Posterior cingulate gyrus (tissue), 11 donors: ENCODE measurements at regions of chrX and their contacts with region 1.

Region 1: DNA sequence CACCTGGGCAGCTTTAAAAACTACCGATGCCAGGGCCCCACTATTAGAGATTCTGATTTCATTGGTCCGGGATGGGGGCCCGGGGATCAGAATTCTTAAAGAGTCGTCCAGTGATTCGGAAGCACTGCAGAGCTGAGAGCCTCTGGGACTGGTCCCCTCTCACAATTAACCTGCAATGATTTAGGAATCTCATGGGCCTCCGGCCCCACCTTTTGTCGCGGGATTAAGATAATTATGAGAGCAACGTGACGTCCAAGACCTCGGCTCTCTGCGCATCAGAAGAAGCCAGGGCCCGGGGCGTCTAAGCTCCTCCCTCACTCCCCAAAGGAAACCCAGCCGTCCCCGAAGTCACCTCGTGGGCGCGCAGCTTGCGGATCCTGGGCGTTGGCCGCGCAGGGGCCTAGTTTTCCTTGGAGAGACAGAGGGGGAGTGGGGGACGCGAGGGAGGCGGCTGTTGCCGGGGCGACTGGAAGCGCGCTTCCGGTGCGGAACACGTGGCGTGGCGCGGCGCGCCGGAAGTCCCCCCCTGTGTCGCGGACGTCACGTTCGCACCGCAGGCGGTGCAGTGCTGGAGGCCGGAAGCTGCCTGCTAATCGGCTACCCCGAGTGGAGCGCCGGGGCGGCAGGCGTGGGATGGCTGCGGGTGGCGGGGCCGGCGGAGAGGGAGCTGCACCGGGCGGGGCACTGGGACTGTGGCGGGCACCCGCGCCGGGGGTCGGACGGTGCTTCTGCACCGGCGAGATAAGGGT is at the start of gene GEMIN8:
- DNase-seq: peak; percentile 74 to 98 (median 82)

Region 2: GRCh38 chrX:13653022-13653693 is 376.4 kb before region 1 on chrX and contains the start of gene TCEANC:
- intact Hi-C with region 1: loop called (anchors 1 kb)
- DNase-seq: peak; percentile 87 to 99 (median 92)

Region 3: DNA sequence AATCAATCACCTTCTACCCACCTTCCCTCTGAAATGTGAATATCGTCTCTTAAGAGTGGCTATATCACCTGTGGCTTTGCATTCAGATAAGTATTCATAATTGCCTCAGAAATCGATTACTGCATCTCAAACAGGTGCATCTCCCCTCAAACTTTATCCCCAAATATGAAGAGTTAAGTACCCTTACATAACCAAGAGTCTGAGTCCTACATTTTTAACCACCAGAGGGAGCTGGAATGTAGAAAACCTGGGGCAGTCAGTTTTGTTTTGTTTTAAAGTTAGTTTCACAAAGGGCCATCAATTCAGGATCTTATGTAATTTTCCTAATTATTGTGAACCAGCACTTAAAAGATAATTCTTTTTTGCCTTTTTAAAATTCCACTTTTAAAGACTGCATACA is 371.0 kb before region 1 on chrX:
- intact Hi-C with region 1: loop called (anchors 1 kb)
- DNase-seq: peak in 1 of 10 donors; percentile 9

Region 4: DNA sequence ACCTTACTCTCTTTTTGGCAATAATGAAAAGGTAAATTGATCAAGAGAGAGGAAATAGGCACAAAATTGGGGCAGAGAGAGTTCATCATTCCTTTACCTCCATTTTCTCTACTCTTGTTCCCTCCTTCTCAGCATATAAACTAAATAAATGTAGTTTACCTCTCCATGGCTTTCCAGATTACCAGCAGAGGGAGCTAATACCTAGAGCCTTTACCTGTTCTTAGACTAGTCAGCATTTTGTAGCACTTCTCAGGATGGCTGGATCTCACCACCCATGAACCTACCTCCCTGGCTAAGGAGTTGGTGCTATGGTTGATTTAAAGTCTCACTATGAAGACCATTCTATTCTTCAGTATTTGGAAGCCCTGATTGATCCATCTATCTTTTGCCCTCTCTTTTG is 279.4 kb before region 1 on chrX:
- intact Hi-C with region 1: loop called (anchors 2 kb)
- DNase-seq: no peak

Region 5: DNA sequence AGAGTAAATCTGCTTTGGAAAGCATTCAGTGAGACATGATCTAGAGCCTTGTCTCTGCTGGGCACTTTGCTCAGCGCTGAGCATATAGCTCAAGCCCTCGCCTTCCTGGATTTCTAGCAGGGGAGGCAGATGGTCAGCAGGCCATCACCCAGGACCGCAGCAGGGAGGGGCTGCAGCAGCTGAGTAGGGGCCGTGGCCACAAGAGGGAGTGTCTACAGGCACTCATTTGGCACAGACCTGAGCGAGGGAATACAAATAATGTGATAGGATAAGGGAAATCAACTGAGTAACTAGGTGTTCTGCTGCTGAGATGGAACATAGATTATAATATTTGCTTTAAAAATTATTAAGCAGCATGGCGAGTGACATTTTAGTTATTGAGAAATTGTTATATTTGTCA is 264.8 kb before region 1 on chrX:
- intact Hi-C with region 1: loop called (anchors 5 kb)
- DNase-seq: peak in 5 of 10 donors; percentile 31 to 91 (median 53)

Region 6: DNA sequence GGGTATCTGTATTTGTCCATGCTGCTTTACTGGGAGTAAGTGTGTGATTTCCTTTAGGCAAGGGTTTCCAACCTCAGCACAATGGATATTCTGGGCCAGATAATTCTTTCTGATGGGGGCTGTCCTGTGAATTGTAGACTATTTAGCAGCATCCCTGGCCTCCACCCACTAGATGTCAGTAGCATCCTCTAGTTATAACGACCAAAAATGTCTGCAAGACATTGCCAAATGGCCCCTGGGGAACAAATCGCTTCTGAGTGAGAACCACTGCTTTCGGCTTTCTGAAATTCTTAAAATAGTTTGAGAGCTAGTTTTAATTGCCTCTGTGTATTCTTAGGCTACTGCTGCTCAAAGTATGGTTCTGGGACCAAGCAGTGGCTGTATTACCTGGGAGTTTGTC is 131.5 kb before region 1 on chrX:
- intact Hi-C with region 1: loop called (anchors 2 kb)
- DNase-seq: peak in 2 of 10 donors; percentile 32 to 44

Region 7: DNA sequence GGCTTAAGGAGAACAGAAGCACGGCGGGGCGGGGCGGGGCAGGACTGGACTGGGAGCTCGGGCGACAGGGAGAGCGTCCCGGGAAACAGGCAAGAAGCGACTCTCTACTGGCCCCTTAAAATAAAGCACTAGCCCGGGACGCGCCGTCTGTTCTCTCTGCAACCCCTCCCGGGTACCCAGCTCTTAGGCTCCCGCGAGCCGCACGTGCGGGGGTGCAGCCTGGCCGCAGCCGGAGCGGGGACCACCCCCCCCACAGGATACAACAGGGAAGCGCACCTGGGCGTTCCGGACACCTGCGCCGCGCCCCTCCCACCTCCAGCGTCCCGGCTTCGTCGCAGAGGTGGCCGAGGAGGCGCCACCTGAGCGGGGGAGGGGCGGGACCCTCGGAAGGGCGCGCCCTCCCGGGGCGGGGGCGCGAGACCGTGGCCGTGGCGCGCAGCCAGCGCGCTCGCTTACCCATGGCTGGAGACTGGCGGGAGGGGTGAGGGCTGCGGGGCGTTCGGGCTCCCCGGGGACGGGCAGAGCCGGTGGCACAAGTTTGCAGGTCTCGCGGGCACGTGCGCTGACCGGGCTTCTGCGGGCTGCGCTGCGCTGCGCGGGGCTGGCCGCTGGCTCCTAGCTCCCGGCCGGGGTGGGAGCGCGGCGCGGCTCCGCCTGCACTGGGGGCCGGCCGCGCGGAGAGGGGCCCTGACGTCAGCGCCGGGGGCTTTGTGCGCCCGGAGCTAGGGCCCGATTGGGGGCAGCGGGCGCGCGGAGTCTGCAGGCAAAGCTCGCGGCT is 91.4 kb before region 1 on chrX:
- intact Hi-C with region 1: loop called (anchors 2 kb)
- DNase-seq: peak in 8 of 10 donors; percentile 17 to 89 (median 50)

Region 8: DNA sequence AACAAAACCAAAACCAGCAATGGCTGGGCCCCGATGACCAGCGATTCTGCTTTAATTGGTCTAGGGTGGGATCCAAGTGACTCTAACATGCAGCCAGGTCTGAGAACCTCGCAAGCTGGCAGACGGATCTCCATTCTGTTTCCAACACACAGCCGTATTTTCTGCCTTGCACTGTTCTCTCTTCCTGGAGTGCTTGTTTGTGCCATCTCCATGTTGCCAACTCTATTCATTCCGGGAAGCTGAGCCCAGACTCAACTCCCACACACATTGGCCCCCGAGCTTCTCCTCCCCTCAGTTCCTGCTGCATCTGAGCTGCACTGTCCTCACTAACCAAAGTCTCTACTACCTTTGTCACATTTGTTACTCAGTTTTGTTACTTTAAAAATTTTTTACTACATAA is 35.5 kb before region 1 on chrX:
- intact Hi-C with region 1: no loop called
- DNase-seq: peak; percentile 39 to 93 (median 53)

Region 9: DNA sequence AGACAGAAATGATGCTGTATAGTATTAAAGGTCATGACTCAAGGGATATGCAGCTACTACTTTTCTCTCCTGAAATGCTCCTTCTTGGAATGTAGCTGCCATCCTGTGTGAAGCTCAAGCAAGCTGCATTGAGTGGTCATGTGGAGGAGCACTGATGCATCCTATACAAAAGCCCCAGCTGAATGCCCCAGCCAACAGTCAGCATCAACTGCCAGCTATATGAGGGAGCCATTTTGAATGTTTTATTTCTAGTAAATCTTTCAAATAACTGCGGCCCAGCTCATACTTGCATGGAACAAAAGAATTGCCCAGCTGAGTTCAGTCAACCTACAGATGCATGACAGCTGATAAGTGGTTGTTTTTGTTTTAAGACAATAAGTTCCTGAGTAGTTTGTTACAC is 165.1 kb after region 1 on chrX:
- intact Hi-C with region 1: no loop called
- DNase-seq: no peak